ENCODE measurements at regions of chr17 and their contacts with region 1.

Region 1: GRCh38 chr17:80101011-80101945 is at the start of gene GAA:
- DNase-seq: peak; percentile 59 to 90
- H3K4me3 ChIP-seq: peak within 1 kb of the TSS; percentile 70 to 86
- H3K27ac ChIP-seq: peak within 1 kb of the TSS; percentile 85 to 89
- H3K4me1 ChIP-seq: peaks cover 0 to 32% (median 11%) of the 10 kb centered on the region in 4 donors
- H3K27me3 ChIP-seq: no peaks in the 10 kb centered on the region
- CTCF ChIP-seq: peak; percentile 72 to 92

Region 2: DNA sequence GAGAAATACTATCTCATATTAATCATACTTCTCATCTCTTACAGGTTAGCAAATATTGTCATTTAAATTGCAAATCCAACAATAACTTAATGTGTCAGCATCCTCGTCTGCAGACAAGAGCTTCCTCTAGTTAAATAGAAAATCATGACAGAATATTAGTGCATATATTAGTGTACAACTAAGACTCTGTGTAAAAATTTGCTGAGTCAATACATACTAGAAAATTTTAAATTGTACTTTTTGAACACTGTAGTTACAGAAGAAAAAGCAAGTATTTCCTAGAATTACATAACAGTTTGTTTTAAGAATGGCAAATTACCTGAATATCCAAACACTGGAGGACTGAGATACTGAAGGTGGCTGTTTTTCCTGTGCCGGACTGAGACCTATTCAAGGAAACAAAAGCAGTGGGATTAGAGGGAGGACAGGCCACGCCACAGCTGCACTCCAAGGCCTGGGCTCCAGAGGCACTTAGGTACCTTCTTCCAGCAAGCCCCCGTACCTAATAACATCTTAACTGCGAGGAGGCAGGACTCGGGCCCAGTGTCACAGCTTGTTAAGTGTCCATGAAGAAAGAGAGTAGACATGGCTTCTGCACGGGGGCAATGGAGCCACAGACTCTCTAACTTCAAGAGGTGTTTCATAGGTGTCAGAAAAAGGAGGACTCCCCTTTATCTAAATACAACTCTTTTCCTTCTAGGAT is 40.3 kb after region 1 on chr17:
- intact Hi-C with region 1: loop called (anchors 5 kb)
- DNase-seq: no peak
- H3K4me3 ChIP-seq: no peak overlapping the region
- H3K27ac ChIP-seq: no peak overlapping the region
- H3K4me1 ChIP-seq: peaks cover 0 to 21% (median 16%) of the 10 kb centered on the region in 4 donors
- H3K27me3 ChIP-seq: no peaks in the 10 kb centered on the region
- CTCF ChIP-seq: no peak

Region 3: DNA sequence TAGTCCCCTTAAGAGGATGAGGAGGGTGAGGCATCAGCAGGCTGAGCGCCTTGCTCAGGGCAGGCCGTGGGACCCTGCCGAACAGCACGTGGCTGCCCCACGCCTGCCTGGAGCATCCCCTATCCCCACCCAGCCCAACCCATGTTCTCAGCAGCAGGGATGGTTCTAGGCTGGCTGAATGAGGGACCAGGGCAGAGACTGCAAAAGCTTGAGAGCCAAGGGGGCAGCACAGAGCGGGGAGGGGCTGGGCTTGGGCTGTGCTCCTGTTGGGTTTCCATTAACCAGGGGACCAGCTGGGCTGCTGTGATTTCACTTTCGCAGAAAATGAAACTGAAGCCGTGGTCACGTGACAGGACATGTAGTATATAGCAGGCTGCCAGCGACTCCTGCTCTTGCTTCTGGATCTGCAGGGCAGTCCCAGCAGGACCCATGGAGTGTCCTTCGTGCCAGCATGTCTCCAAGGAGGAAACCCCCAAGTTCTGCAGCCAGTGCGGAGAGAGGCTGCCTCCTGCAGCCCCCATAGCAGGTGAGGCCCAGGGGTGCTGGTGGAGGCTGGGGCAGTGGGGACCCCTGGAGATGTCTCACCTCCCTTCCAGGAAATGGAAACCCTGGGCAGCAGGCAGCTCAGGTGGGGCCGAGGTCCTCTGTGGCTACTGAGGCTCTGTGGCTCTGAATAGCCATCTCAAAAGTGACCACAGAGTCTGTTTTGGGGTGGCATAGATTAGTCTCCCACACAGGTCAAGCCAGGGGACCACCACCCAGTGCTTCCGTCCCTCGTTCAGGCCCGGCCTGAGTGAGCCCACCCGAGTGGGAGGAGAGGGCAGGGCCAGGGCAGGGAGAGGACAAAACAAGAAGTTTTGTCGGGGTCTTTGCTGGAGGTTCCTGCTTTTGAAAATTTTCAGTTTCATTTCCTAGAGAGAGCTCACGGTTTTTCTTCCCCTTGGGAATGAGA is 162.3 kb after region 1 on chr17:
- intact Hi-C with region 1: loop called (anchors 5 kb)
- DNase-seq: peak; percentile 87 to 90
- H3K4me3 ChIP-seq: peak overlapping the region; percentile 30 to 47
- H3K27ac ChIP-seq: peak overlapping the region; percentile 39 to 99
- H3K4me1 ChIP-seq: peaks cover 0 to 39% (median 30%) of the 10 kb centered on the region in 4 donors
- H3K27me3 ChIP-seq: no peaks in the 10 kb centered on the region
- CTCF ChIP-seq: no peak